WTC11 (cell line): ENCODE measurements at regions of chr12 and their contacts with region 1.

Region 1: GRCh38 chr12:52023182-52023975 is 16.6 kb downstream of the TAMALIN start:
- DNase-seq: peak; percentile 92
- ATAC-seq: peak; percentile 38
- H3K4me3 Mint-ChIP-seq: peak overlapping the region; percentile 70
- H3K27ac Mint-ChIP-seq: no peak overlapping the region
- H3K4me1 Mint-ChIP-seq: peaks cover 35% of the 10 kb centered on the region
- H3K27me3 Mint-ChIP-seq: peaks cover 46% of the 10 kb centered on the region
- CTCF ChIP-seq: peak; percentile 96

Region 2: DNA sequence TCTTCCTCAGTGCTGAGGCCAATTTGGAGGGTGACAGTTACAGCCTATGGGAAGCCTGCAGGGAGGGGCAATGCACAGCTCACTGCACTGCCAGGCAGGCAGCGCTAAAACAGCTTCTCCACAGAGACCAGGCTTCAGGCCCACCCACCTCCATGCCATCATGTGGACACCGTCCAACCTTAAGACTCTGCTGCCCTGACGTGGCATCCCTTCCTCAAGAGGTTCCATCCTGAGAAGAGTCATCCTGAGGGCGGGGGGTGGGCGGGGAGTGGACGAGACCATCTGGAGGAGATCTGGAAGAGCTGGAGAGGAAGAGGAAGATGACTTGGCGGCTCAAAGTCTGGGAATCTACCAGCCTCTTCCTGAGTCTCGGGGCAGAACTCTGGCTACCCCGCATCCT is 124.4 kb before region 1 on chr12:
- CTCF ChIA-PET with region 1: interaction called, 27 read pairs
- POLR2A ChIA-PET with region 1: no interaction called
- DNase-seq: no peak
- ATAC-seq: no peak
- H3K4me3 Mint-ChIP-seq: no peak overlapping the region
- H3K27ac Mint-ChIP-seq: no peak overlapping the region
- H3K4me1 Mint-ChIP-seq: peaks cover 2% of the 10 kb centered on the region; the same call in 1 of the 2 replicates
- H3K27me3 Mint-ChIP-seq: 0 out of 2 replicates have a peak, but pooled peaks cover 2% of the 10 kb centered on the region
- CTCF ChIP-seq: no peak

Region 3: DNA sequence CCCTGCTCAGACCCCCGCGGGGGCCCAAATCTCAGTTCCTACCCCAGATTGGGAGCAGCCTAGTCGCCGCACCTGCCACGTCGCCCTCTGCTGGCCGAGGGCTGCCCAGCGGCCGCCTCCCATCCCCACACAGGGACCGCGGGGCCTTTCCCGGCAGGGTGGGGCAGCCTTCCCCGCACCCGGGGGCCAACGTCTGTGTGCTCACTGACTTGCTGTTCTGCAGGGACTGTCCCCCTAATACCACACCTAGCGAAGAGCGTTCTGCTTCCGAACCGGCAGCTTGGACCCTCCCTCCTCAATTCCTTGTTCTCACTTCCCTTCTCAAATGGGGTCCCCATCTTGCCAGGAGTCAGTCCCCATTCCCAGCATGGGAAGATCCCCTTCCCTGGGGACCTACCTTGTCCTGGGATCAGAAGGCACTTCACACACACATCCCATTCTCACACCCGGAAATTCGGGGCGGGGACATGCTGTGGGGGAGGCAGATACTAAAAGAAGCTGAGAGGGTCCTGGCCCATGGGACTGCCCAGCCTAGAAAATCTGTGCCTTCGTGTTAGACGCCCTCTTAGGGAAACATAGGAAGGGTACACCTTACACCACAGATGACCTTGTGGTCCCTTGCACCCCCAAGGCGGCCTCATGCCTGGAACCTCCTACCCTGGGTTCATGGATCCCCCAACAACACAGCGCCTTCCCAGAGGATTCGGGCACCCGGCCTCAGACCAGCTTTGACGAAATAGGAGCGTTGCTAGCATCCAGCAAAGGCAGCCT is 99.7 kb before region 1 on chr12:
- CTCF ChIA-PET with region 1: interaction called, 32 read pairs
- POLR2A ChIA-PET with region 1: no interaction called
- DNase-seq: peak; percentile 79
- ATAC-seq: peak; percentile 84
- H3K4me3 Mint-ChIP-seq: peak overlapping the region; percentile 52
- H3K27ac Mint-ChIP-seq: no peak overlapping the region
- H3K4me1 Mint-ChIP-seq: peaks cover 26% of the 10 kb centered on the region
- H3K27me3 Mint-ChIP-seq: peaks cover 22% of the 10 kb centered on the region
- CTCF ChIP-seq: peak; percentile 77

Region 4: DNA sequence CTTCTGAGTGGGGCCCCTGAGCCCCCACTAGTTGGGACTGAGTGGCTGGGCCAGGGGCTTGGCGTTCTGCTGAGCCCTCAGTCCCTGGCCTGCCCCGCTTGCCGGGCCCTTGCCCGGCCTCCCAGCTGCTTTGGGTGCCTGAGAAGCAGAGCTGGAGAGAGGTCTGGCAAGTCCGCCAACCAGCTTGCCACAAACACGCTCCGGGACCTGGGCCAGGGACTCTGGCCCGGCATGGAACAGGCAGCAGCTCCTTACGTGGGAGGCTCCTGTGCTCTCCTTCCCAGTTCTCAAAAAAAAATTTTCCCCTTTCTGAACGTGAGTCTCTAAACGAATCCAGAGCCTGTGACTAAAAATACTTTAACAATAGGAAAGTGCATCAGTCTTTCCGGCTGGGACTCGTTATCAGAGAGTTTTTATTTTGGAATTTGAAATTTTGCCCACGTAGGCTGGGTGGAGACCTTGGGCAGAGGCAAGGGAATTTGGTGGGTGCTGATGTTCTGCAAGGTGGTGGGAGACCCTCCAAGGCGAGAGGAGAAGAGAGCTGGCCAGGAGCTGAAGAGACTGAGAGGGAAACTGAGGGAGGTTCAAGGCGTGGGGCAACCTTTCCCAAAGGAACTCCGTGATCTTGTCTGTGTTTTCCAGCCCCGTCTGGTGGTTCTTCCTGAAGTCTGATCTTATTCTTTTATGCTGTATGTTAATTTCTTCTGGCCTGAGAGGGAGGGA is 21.0 kb after region 1 on chr12:
- CTCF ChIA-PET with region 1: interaction called, 130 read pairs
- POLR2A ChIA-PET with region 1: no interaction called
- DNase-seq: no peak
- ATAC-seq: no peak
- H3K4me3 Mint-ChIP-seq: no peak overlapping the region
- H3K27ac Mint-ChIP-seq: no peak overlapping the region
- H3K4me1 Mint-ChIP-seq: peaks cover 6% of the 10 kb centered on the region
- H3K27me3 Mint-ChIP-seq: peaks cover 20% of the 10 kb centered on the region
- CTCF ChIP-seq: no peak

Region 5: GRCh38 chr12:52063981-52064649 is 40.7 kb after region 1 on chr12:
- CTCF ChIA-PET with region 1: interaction called, 165 read pairs
- POLR2A ChIA-PET with region 1: interaction called, 3 read pairs
- DNase-seq: no peak
- ATAC-seq: no peak
- H3K4me3 Mint-ChIP-seq: no peak overlapping the region
- H3K27ac Mint-ChIP-seq: 0 out of 2 replicates have a peak overlapping the region, but pooled peaks have one; percentile 27
- H3K4me1 Mint-ChIP-seq: no peaks in the 10 kb centered on the region; the same call in 1 of the 2 replicates
- H3K27me3 Mint-ChIP-seq: peaks cover 6% of the 10 kb centered on the region
- CTCF ChIP-seq: no peak

Region 6: DNA sequence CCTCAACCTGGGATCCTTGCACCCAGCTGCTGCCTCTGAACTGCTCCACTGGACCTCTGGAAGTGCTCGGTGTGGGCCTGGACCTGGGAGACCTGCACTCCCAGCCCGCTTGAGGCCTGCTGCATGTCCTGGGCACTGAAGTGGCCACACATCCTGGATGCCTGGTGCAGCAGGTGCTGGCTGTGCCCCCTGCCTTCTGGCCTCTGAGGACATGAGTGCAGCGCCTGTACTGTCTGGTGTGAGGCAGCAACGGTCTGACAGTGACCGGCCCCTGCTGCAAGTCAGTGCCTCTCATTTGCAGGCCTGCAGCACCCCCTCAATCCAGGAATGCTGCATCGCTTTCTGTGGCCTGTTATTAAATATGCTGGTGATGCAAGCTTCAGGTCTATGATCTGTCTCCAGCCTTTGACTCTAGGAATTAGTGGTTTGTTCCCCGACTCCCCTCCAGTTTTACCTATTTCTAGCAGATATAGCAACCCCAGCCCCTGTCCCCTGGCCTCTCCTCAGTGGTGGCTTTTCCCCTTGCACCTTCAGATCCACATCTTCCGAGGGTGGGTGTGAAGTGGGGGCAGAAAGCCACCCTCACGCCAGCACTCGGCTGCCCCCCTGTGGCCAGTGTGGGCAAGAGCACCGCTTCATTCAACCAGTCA is 59.7 kb after region 1 on chr12:
- CTCF ChIA-PET with region 1: interaction called, 388 read pairs
- POLR2A ChIA-PET with region 1: interaction called, 11 read pairs
- DNase-seq: peak; percentile 83
- ATAC-seq: peak; percentile 46
- H3K4me3 Mint-ChIP-seq: no peak overlapping the region
- H3K27ac Mint-ChIP-seq: no peak overlapping the region
- H3K4me1 Mint-ChIP-seq: peaks cover 19% of the 10 kb centered on the region
- H3K27me3 Mint-ChIP-seq: no peaks in the 10 kb centered on the region
- CTCF ChIP-seq: peak; percentile 92

Region 7: DNA sequence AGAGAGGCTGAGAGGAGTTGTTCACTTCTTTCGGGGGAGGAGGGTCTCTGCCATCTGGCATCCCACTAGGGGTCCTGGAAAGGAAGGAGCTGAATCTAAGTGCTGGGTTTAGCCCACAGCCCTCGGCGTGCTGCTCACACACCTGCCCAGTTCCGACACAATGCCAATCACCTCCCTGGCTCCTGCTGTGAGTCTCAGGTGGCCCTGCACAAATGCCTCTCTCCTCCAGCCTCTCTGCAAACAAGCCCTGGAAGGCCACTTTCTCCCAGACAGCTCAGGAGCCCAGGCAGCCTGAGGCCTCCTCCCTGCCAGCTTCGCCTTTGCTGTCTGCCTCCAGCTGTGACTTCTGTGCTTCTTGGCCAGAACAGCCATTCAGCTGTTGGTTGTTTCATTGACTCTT is 107.3 kb after region 1 on chr12:
- CTCF ChIA-PET with region 1: interaction called, 435 read pairs
- POLR2A ChIA-PET with region 1: no interaction called
- DNase-seq: no peak
- ATAC-seq: peak; percentile 50
- H3K4me3 Mint-ChIP-seq: no peak overlapping the region
- H3K27ac Mint-ChIP-seq: no peak overlapping the region
- H3K4me1 Mint-ChIP-seq: peaks cover 41% of the 10 kb centered on the region
- H3K27me3 Mint-ChIP-seq: no peaks in the 10 kb centered on the region
- CTCF ChIP-seq: no peak

Region 8: DNA sequence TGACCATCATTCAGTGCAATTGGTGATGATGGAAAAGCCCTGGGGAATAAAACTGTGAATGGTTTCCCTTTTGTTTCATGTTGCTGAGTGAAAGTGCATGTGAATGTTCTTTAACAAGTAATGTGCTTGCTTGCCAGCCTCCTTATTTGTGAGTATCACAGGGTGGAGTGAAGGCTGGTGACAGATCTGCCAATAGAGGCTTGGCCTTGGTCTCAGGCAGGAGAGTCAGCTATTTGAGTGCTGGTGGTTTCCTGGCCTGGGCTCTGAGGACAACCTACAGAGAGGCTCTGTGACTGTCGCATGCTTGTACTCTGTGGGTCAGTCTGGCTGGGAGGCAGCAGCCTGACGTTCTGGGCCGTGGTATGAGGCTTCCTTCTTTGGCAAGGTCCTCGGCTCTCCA is 323.2 kb after region 1 on chr12:
- CTCF ChIA-PET with region 1: no interaction called
- POLR2A ChIA-PET with region 1: no interaction called
- DNase-seq: no peak
- ATAC-seq: no peak
- H3K4me3 Mint-ChIP-seq: no peak overlapping the region
- H3K27ac Mint-ChIP-seq: no peak overlapping the region
- H3K4me1 Mint-ChIP-seq: no peaks in the 10 kb centered on the region
- H3K27me3 Mint-ChIP-seq: no peaks in the 10 kb centered on the region
- CTCF ChIP-seq: no peak

Region 9: DNA sequence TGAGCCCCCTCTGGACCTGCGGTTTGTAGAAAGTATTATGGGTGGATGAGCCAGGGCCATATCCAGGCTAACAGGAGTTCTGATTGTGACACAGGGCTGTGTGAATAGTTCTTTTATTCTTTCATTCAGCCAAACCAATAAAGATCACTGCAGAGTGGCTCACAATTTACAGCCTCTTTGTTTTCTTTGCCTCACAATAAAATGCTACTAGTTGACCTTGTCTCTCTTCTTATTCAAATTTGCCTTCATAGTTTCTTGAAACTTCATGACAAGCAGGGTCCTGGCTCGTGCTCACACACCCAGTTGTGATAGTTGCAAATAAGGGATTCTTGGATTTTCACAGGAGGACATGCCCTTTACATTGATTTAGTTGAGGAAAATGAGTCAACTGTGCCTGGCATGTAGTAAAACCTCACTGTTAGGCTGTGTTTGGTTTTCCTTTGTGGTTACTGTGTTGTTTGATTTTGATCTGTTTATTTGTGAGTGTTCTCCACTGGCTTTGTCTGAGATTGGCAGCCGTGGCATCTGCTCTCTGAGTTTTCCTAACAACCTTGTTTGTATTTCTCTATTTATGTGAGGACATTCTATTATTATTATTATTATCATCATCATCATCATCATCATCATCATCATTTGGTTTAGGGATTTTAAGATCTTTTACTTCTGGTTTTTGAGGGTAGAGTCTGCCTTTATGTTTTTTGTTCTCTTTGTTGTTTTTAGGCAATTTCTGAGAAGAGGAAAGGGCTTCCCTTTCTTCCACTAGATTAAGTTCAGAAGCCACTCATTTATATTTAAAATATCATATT is 431.2 kb after region 1 on chr12:
- CTCF ChIA-PET with region 1: no interaction called
- POLR2A ChIA-PET with region 1: no interaction called
- DNase-seq: no peak
- ATAC-seq: peak; percentile 62
- H3K4me3 Mint-ChIP-seq: no peak overlapping the region
- H3K27ac Mint-ChIP-seq: peak overlapping the region; percentile 42; the same call in 1 of the 2 replicates
- H3K4me1 Mint-ChIP-seq: peaks cover 14% of the 10 kb centered on the region
- H3K27me3 Mint-ChIP-seq: no peaks in the 10 kb centered on the region; the same call in 1 of the 2 replicates
- CTCF ChIP-seq: no peak